ENCODE measurements at regions of chr21 and their contacts with region 1.

Region 1: GRCh38 chr21:41612674-41613532 is 104.9 kb upstream of the TMPRSS2 start:
- DNase-seq: peak; percentile 79
- ATAC-seq: peak; percentile 82
- H3K4me3 Mint-ChIP-seq: peak overlapping the region; percentile 30
- H3K27ac Mint-ChIP-seq: peak overlapping the region; percentile 60
- H3K4me1 Mint-ChIP-seq: peaks cover 17% of the 10 kb centered on the region
- H3K27me3 Mint-ChIP-seq: peaks cover 6% of the 10 kb centered on the region
- CTCF ChIP-seq: peak; percentile 81

Region 2: DNA sequence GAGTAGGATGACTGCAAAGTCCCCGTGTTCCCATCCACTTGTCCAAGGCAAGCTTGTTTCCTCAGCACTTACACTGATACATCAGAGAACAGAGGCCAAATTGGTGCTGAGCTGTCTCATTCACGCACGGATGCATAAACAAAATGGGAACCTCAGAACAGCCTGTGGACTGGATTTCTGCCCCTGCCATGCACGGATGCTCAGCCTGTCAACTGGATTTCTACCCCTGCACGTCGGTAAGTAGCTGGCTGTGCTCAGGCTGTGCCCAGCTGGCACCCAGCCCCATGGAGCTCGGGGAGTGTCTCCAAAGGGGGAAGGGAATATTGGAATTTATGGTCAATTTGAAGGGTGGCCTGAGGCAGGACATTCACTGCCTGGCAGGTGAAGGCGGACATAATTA is 64.1 kb before region 1 on chr21:
- CTCF ChIA-PET with region 1: no interaction called
- POLR2A ChIA-PET with region 1: no interaction called
- DNase-seq: no peak
- ATAC-seq: no peak
- H3K4me3 Mint-ChIP-seq: no peak overlapping the region
- H3K27ac Mint-ChIP-seq: no peak overlapping the region
- H3K4me1 Mint-ChIP-seq: no peaks in the 10 kb centered on the region
- H3K27me3 Mint-ChIP-seq: no peaks in the 10 kb centered on the region; the same call in 1 of the 2 replicates
- CTCF ChIP-seq: no peak

Region 3: GRCh38 chr21:41601573-41602368 is 11.1 kb before region 1 on chr21:
- CTCF ChIA-PET with region 1: interaction called, 37 read pairs
- POLR2A ChIA-PET with region 1: no interaction called
- DNase-seq: no peak
- ATAC-seq: no peak
- H3K4me3 Mint-ChIP-seq: no peak overlapping the region
- H3K27ac Mint-ChIP-seq: no peak overlapping the region
- H3K4me1 Mint-ChIP-seq: peaks cover 14% of the 10 kb centered on the region
- H3K27me3 Mint-ChIP-seq: peaks cover 1% of the 10 kb centered on the region
- CTCF ChIP-seq: no peak

Region 4: GRCh38 chr21:41656962-41657516 is 44.1 kb after region 1 on chr21:
- CTCF ChIA-PET with region 1: interaction called, 12 read pairs
- POLR2A ChIA-PET with region 1: no interaction called
- DNase-seq: no peak
- ATAC-seq: peak; percentile 48; the same call in 1 of the 2 replicates
- H3K4me3 Mint-ChIP-seq: no peak overlapping the region; the same call in 1 of the 2 replicates
- H3K27ac Mint-ChIP-seq: peak overlapping the region; percentile 39; the same call in 1 of the 2 replicates
- H3K4me1 Mint-ChIP-seq: peaks cover 29% of the 10 kb centered on the region
- H3K27me3 Mint-ChIP-seq: peaks cover 7% of the 10 kb centered on the region
- CTCF ChIP-seq: no peak

Region 5: GRCh38 chr21:41726945-41727783 is 114.3 kb after region 1 on chr21:
- CTCF ChIA-PET with region 1: interaction called, 27 read pairs
- POLR2A ChIA-PET with region 1: no interaction called
- DNase-seq: no peak
- ATAC-seq: no peak
- H3K4me3 Mint-ChIP-seq: no peak overlapping the region
- H3K27ac Mint-ChIP-seq: no peak overlapping the region
- H3K4me1 Mint-ChIP-seq: peaks cover 15% of the 10 kb centered on the region
- H3K27me3 Mint-ChIP-seq: peaks cover 38% of the 10 kb centered on the region
- CTCF ChIP-seq: no peak

Region 6: DNA sequence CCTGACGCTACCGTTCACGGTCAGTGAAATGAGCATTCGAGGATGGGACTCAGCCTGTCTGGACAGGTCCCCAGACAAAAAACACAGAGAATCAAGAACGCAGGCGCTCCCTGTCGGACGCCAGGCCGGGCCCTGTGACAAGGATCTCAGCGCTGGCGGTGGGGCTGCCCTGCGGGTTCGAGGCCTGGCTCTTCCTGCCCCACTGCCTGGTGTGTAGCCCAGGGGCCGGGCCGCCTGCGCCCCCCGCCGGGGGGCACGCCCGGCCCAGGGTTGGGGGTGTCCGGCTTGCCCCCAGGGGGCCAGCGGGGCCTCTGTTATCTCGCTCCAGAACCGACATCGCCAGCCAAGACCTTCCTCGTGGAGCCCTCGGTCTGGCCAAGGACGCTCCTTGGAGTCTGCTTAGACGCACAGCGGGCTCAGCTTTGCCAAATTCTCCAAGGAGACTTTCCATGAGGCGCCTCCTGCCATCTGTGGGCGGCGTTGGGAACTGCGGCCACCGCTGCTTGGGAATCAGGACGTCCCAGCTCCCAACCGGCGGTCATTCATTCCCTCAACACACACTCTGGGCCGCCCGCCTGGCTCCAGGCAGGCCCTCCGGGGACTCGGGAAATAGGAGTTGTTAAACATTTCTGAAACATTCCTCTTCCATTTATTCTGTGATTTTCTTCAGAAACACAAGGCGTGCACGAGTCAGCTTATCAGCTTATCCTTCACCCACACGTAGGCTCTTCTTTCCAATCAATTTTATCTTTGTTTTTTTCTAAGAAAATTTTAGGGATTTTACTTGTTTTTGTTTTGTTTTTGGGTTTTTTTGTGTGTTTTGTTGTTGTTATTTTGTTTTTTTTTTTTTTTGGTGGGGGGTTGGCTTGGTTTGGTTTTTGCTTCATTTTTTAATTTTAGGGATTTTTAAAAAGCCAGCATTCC is 165.3 kb after region 1 on chr21:
- CTCF ChIA-PET with region 1: interaction called, 183 read pairs
- POLR2A ChIA-PET with region 1: interaction called, 6 read pairs
- DNase-seq: peak; percentile 97
- ATAC-seq: peak; percentile 83
- H3K4me3 Mint-ChIP-seq: peak overlapping the region; percentile 47
- H3K27ac Mint-ChIP-seq: peak overlapping the region; percentile 67; the same call in 1 of the 2 replicates
- H3K4me1 Mint-ChIP-seq: peaks cover 25% of the 10 kb centered on the region
- H3K27me3 Mint-ChIP-seq: peaks cover 9% of the 10 kb centered on the region
- CTCF ChIP-seq: peak; percentile 63

Region 7: DNA sequence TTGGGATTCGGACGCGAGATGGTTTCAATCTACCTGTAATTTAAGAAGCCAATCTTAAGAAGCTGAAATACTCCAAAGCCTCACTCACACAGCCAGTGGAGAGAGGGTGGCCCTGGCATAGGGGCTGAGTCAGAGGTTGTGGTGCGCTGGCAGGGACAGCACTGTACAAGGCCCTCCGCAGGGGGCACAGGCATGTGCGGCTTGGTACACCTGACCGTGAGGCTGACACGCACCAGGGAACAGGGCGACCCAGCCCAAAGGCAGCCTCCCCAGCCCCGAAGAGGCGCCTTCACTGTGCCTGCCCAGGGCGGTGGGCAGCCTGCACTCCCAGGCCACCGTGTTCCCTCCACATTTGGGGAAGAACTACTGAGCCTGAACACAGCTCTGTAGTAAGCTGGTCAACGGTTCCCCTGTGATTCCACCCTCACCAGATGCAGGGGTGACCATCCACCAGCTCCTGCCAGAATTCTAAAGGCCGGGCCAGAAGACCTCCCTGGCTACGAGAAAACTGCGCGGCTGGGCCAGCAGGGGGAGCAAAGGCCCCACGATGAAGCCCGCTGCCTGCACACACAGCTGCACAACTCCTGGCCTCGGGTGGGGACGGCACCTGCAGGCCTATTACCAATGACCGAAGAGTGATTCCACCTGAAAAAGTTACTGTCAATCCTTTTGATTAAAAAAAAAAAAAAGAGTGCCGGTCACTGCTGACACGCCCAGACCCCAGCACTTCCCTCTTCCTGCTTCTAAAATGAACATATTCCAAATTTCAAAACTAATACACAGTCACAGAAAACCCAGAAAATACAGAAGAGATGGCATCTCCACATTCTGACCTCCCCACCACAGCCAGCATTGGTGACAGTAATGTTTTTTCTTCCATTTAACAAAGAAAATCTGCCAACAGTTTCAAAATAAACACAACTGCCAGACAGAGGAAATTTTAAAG is 203.6 kb after region 1 on chr21:
- CTCF ChIA-PET with region 1: interaction called, 126 read pairs
- POLR2A ChIA-PET with region 1: no interaction called
- DNase-seq: peak; percentile 75
- ATAC-seq: peak; percentile 73
- H3K4me3 Mint-ChIP-seq: no peak overlapping the region
- H3K27ac Mint-ChIP-seq: no peak overlapping the region
- H3K4me1 Mint-ChIP-seq: no peaks in the 10 kb centered on the region
- H3K27me3 Mint-ChIP-seq: no peaks in the 10 kb centered on the region
- CTCF ChIP-seq: peak; percentile 73

Region 8: DNA sequence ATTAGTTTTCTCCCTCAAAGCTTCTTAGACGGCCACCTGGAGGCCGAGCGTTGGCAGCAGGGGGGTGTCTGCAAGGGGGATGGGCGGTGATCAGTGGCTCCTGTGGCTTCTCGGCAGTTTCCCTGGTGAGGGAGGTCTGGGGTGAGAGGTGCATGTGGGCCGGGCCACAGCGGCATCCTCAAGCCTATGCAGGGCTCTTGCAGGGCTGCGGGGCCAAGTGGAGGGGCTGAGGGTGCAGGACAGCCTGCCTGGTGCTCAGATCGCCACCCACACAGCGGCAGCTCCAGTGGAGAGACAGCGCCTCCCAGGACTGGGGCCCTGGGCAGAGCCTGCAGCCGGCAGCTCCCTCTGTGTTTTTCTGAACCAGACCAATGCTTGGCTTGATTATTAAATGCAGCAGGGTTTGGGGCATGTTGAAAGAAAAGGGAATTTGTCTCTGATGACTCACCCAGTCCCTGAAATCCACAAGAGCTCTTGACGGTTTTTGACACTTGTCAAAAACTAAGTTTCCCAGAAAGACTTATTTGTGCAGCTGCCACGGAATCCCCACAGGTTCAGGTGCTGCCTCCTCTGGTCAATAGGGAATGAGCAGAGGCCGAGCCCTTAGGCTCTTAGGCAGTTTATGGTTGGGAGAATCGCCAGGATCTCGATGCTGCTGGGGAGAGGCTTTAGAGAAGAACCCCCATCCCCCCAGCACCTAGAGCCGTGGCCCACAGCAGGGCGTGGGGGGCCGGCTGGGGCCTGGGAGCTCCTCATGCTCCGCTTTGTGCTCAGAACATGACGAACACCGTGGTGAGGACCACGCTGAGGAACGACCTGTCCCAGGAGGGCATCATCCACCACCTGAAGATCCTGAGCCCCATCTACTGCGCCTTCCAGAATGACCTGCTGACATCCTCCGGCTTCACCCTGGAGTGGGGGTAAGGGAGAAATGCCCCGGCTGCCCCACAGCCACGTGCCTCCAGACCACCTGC is 513.0 kb after region 1 on chr21:
- CTCF ChIA-PET with region 1: interaction called, 10 read pairs
- POLR2A ChIA-PET with region 1: no interaction called
- DNase-seq: peak; percentile 29
- ATAC-seq: peak; percentile 60; the same call in 1 of the 2 replicates
- H3K4me3 Mint-ChIP-seq: no peak overlapping the region
- H3K27ac Mint-ChIP-seq: no peak overlapping the region
- H3K4me1 Mint-ChIP-seq: peaks cover 5% of the 10 kb centered on the region
- H3K27me3 Mint-ChIP-seq: no peaks in the 10 kb centered on the region
- CTCF ChIP-seq: no peak